ENCODE measurements at regions of chr3 and their contacts with region 1.

Region 1: GRCh38 chr3:151168269-151169094 is 34.5 kb downstream of the GPR171 start:
- DNase-seq: peak; percentile 72 to 89 (median 79)
- ATAC-seq: peak; percentile 63
- H3K4me3 ChIP-seq: no peak overlapping the region
- H3K4me3 Mint-ChIP-seq: no peak overlapping the region
- H3K27ac ChIP-seq: no peak overlapping the region
- H3K27ac Mint-ChIP-seq: no peak overlapping the region
- H3K4me1 ChIP-seq: peaks cover 41% of the 10 kb centered on the region
- H3K4me1 Mint-ChIP-seq: peaks cover 43% of the 10 kb centered on the region
- H3K27me3 ChIP-seq: no peaks in the 10 kb centered on the region
- H3K27me3 Mint-ChIP-seq: no peaks in the 10 kb centered on the region
- CTCF ChIP-seq: peak; percentile 97

Region 2: GRCh38 chr3:150588027-150588830 is 580.3 kb before region 1 on chr3:
- CTCF ChIA-PET with region 1: no interaction called
- POLR2A ChIA-PET with region 1: no interaction called
- intact Hi-C with region 1: no loop called
- DNase-seq: no peak
- ATAC-seq: no peak
- H3K4me3 ChIP-seq: no peak overlapping the region
- H3K4me3 Mint-ChIP-seq: no peak overlapping the region
- H3K27ac ChIP-seq: no peak overlapping the region
- H3K27ac Mint-ChIP-seq: peak overlapping the region; percentile 43
- H3K4me1 ChIP-seq: no peaks in the 10 kb centered on the region
- H3K4me1 Mint-ChIP-seq: peaks cover 14% of the 10 kb centered on the region
- H3K27me3 ChIP-seq: no peaks in the 10 kb centered on the region
- H3K27me3 Mint-ChIP-seq: no peaks in the 10 kb centered on the region
- CTCF ChIP-seq: no peak

Region 3: DNA sequence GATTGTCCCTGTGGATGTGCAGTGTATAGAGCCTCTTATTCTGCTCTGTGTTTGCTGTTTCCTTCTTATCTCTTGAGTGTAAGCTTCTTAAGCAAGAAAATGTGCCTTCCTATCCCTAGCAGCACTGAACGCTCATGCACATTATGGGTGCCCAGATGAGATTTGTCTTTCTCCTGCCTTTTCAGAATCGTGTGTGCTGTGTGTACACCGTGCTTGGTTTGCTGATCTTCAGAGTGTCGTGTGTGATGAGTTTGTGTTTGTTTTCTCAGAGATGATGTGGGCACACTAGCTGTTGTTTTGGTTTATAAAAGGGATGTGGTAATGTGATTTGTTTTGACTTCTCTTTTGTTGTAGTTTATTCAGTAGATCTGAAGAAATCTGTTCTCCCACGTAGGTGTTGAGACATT is 14.8 kb after region 1 on chr3:
- CTCF ChIA-PET with region 1: interaction called, 6 read pairs
- POLR2A ChIA-PET with region 1: interaction called, 14 read pairs
- intact Hi-C with region 1: no loop called
- DNase-seq: peak in 4 of 14 experiments; percentile 26 to 62 (median 38)
- ATAC-seq: peak; percentile 87
- H3K4me3 ChIP-seq: peak overlapping the region; percentile 17
- H3K4me3 Mint-ChIP-seq: peak overlapping the region; percentile 64
- H3K27ac ChIP-seq: peak overlapping the region in 1 of 2 donors; percentile 33
- H3K27ac Mint-ChIP-seq: peak overlapping the region; percentile 69
- H3K4me1 ChIP-seq: peaks cover 20% of the 10 kb centered on the region
- H3K4me1 Mint-ChIP-seq: peaks cover 31% of the 10 kb centered on the region
- H3K27me3 ChIP-seq: no peaks in the 10 kb centered on the region
- H3K27me3 Mint-ChIP-seq: no peaks in the 10 kb centered on the region
- CTCF ChIP-seq: no peak

Region 4: DNA sequence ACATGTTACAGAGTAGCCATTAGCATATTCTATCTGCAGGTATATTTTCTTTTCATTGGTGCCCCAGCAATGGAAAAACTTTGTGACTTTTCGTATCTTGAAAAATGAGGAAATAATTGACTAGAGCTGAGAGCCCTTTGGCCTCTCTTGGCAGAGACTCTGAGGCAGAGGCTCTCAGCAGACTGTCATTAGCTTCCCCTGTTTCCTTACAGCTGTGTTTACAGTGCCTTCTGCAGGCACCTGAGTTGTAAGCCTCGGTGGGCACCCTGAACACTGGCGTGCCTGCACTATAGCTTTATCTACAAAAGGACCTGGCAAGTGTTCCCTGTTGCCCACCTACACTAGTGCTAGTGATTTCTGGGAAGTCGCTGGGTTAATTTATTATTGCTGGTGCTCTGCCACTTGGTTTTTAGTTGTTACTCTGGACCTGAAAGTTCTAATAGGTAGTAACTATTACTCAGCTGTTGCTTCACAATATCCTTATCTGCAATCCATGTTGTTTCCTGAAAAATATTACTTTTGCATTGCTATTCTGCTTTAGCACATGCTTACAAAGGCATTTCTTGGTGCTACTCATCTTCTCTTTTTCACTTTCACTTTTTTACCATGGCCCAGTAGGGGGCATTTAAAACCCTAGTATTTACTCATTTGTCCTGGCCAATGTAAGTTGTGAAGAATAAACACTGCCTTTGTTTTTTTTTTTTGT is 42.3 kb after region 1 on chr3:
- CTCF ChIA-PET with region 1: interaction called, 9 read pairs
- POLR2A ChIA-PET with region 1: interaction called, 5 read pairs
- intact Hi-C with region 1: loop called (anchors 2 kb)
- DNase-seq: peak in 3 of 14 experiments; percentile 30 to 36 (median 34)
- ATAC-seq: peak; percentile 43
- H3K4me3 ChIP-seq: no peak overlapping the region
- H3K4me3 Mint-ChIP-seq: no peak overlapping the region
- H3K27ac ChIP-seq: no peak overlapping the region
- H3K27ac Mint-ChIP-seq: peak overlapping the region; percentile 60
- H3K4me1 ChIP-seq: peaks cover 29% of the 10 kb centered on the region
- H3K4me1 Mint-ChIP-seq: peaks cover 42% of the 10 kb centered on the region
- H3K27me3 ChIP-seq: no peaks in the 10 kb centered on the region
- H3K27me3 Mint-ChIP-seq: no peaks in the 10 kb centered on the region
- CTCF ChIP-seq: no peak

Region 5: GRCh38 chr3:151248772-151249337 is 80.4 kb after region 1 on chr3:
- CTCF ChIA-PET with region 1: no interaction called
- POLR2A ChIA-PET with region 1: no interaction called
- intact Hi-C with region 1: no loop called
- DNase-seq: no peak
- ATAC-seq: no peak
- H3K4me3 ChIP-seq: no peak overlapping the region
- H3K4me3 Mint-ChIP-seq: no peak overlapping the region
- H3K27ac ChIP-seq: no peak overlapping the region
- H3K27ac Mint-ChIP-seq: no peak overlapping the region
- H3K4me1 ChIP-seq: no peaks in the 10 kb centered on the region
- H3K4me1 Mint-ChIP-seq: no peaks in the 10 kb centered on the region
- H3K27me3 ChIP-seq: no peaks in the 10 kb centered on the region
- H3K27me3 Mint-ChIP-seq: no peaks in the 10 kb centered on the region
- CTCF ChIP-seq: no peak

Region 6: DNA sequence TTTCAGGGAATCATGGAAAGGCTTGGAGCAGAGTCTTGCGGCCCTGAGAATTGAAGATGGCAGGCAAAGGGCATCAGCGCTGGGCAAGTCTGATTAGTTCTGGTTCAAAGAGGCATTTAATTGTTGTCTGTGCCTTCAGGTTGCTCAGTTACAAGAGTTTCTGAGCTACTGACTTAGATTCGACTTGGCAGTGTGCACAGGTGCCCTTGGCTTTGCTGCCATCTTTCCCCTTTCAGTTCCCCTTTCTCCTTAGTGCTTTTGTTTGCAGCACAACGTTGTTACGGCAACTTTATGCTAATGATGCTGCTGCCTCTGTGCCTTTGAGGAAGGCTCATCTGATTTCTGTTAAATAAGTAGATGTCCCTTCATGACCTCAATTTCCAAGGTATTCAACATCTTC is 97.4 kb after region 1 on chr3:
- CTCF ChIA-PET with region 1: interaction called, 11 read pairs
- POLR2A ChIA-PET with region 1: no interaction called
- intact Hi-C with region 1: no loop called
- DNase-seq: peak in 3 of 14 experiments; percentile 26 to 62 (median 53)
- ATAC-seq: no peak
- H3K4me3 ChIP-seq: no peak overlapping the region
- H3K4me3 Mint-ChIP-seq: no peak overlapping the region
- H3K27ac ChIP-seq: no peak overlapping the region
- H3K27ac Mint-ChIP-seq: no peak overlapping the region
- H3K4me1 ChIP-seq: peaks cover 3% of the 10 kb centered on the region
- H3K4me1 Mint-ChIP-seq: peaks cover 9% of the 10 kb centered on the region
- H3K27me3 ChIP-seq: no peaks in the 10 kb centered on the region
- H3K27me3 Mint-ChIP-seq: no peaks in the 10 kb centered on the region
- CTCF ChIP-seq: no peak

Region 7: DNA sequence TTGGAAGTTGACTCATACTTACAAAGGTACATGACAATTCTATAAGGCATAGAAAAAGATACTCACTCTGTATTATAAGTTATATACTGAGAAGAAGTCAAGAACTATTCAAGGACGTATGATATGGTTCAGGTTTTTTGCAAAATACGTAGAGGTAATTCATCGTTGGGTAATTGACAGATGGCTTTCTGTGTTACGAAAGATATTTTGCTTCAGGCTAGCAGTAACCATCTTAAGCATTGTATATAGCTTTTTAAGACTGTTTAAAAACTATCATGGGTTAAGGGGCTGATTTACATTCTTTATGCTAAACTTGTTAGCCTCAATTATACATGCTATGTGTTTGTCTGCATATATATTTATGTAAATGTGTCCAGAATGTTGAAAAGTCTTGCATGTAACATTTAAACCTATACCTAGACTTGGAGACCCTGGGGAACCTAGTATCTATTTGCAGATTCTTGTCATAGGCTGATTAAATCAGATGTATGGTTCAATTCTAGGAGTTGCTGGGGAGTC is 120.9 kb after region 1 on chr3:
- CTCF ChIA-PET with region 1: interaction called, 15 read pairs
- POLR2A ChIA-PET with region 1: no interaction called
- intact Hi-C with region 1: no loop called
- DNase-seq: no peak
- ATAC-seq: no peak
- H3K4me3 ChIP-seq: no peak overlapping the region
- H3K4me3 Mint-ChIP-seq: no peak overlapping the region
- H3K27ac ChIP-seq: no peak overlapping the region
- H3K27ac Mint-ChIP-seq: no peak overlapping the region
- H3K4me1 ChIP-seq: no peaks in the 10 kb centered on the region
- H3K4me1 Mint-ChIP-seq: no peaks in the 10 kb centered on the region
- H3K27me3 ChIP-seq: no peaks in the 10 kb centered on the region
- H3K27me3 Mint-ChIP-seq: no peaks in the 10 kb centered on the region
- CTCF ChIP-seq: no peak

Region 8: GRCh38 chr3:151918253-151919029 is 750.0 kb after region 1 on chr3:
- CTCF ChIA-PET with region 1: no interaction called
- POLR2A ChIA-PET with region 1: no interaction called
- intact Hi-C with region 1: loop called in 1 of 2 experiments (anchors 5 kb)
- DNase-seq: peak in 3 of 14 experiments; percentile 49 to 59 (median 54)
- ATAC-seq: peak; percentile 34
- H3K4me3 ChIP-seq: no peak overlapping the region
- H3K4me3 Mint-ChIP-seq: no peak overlapping the region
- H3K27ac ChIP-seq: no peak overlapping the region
- H3K27ac Mint-ChIP-seq: no peak overlapping the region
- H3K4me1 ChIP-seq: no peaks in the 10 kb centered on the region
- H3K4me1 Mint-ChIP-seq: no peaks in the 10 kb centered on the region
- H3K27me3 ChIP-seq: no peaks in the 10 kb centered on the region
- H3K27me3 Mint-ChIP-seq: no peaks in the 10 kb centered on the region
- CTCF ChIP-seq: peak; percentile 68